Body of pancreas (tissue), 4 donors: ENCODE measurements at regions of chr17 and their contacts with region 1.

Region 1: GRCh38 chr17:35747540-35748017 is 5.5 kb downstream of the GAS2L2 start:
- DNase-seq: peak; percentile 83 to 89 (median 84)
- ATAC-seq: peak; percentile 86
- H3K4me3 ChIP-seq: no peak overlapping the region
- H3K27ac ChIP-seq: no peak overlapping the region
- H3K4me1 ChIP-seq: peaks cover 10% of the 10 kb centered on the region
- H3K27me3 ChIP-seq: peaks cover 0 to 5% of the 10 kb centered on the region in 2 donors
- CTCF ChIP-seq: peak; percentile 83 to 98 (median 90)
- POLR2A ChIP-seq: no peak

Region 2: GRCh38 chr17:35612924-35613521 is 134.6 kb before region 1 on chr17:
- intact Hi-C with region 1: loop called (anchors 5 kb)
- DNase-seq: peak; percentile 39 to 73 (median 56)
- ATAC-seq: no peak
- H3K4me3 ChIP-seq: no peak overlapping the region
- H3K27ac ChIP-seq: no peak overlapping the region
- H3K4me1 ChIP-seq: peaks cover 7% of the 10 kb centered on the region
- H3K27me3 ChIP-seq: no peaks in the 10 kb centered on the region
- CTCF ChIP-seq: peak; percentile 8 to 63 (median 48)
- POLR2A ChIP-seq: no peak